Activated naive CD4-positive, alpha-beta T cell treated with anti-CD3 and anti-CD28 coated beads for 36 hours (primary cell): ENCODE measurements at regions of chr10 and their contacts with region 1.

Region 1: DNA sequence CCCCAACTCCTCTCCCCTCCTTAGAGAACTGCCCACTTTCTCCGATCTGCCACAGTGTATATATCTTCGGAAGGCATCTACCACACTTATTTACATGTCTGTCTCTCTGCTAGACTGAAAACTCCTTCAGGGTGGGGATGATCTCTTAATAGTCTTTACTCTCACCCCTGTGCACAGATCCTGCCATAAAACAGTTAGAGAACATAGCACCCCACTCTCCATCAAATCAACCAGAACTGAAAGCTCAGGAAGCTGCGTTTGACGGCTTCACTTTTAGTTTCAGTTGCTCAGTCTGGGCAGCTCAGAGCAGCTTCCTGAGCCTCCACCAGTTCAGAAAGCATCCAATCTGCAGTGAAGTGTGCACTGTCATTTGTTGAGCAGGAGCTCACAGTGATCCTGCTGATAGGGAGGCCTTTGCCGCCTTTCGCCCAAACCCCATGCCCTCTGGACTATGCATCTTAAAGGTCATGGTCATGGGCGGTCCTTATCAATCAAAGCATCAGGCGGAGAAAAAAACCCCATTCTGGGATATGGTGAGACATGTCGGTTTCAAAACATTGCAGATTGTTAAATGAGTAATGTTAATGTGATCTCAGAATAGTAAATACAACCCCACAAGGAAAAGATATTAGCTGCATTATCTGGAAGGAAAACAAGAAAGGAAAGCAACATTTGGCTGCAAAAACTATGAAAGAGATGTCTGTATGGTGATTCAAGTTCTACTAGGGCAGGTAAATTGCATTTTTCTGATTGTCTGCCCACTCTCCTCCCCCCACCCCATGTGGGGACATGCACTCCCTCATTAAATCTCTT is 167.1 kb upstream of the ADO start:
- DNase-seq: peak; percentile 81
- H3K4me3 Mint-ChIP-seq: no peak overlapping the region
- H3K27ac Mint-ChIP-seq: no peak overlapping the region
- H3K4me1 Mint-ChIP-seq: peaks cover 14% of the 10 kb centered on the region
- H3K27me3 Mint-ChIP-seq: no peaks in the 10 kb centered on the region

Region 2: DNA sequence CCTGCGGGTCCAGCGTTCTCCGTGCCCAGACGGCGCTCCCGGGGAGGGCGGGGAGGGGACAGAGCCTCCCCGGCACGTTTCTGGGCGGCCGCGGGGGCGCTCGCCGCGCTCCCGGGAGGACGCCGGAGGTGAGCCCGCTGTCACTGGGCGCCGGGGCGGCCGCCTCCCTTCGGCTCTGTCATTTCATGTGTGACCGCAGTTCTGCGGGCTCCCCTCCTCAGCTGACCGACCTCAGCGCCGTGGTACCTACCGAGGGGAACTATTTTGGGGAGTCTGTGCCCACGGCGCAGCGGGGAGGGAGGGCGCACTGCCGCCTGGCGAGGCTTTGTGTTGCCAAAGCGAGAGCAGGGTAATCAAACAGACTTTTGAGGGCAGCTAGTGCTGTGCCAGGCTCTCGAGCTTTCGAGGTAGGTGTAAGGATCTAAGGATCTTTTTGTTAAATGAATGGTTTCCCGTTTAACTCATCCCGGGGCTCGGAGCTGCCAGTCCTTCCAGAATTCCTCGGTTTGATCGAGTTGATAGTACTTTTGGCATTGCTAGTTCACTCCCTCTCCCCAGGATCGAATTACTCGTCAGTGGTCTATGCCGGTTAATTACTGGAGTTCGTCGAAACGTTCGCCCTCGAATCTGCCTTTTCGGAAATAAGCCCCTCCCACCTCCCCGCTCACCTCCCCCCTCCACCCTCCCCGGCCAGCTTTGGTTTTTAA is 734.1 kb before region 1 on chr10:
- CTCF ChIA-PET with region 1: no interaction called
- intact Hi-C with region 1: loop called (anchors 1 kb)
- DNase-seq: peak; percentile 74
- H3K4me3 Mint-ChIP-seq: peak overlapping the region; percentile 99
- H3K27ac Mint-ChIP-seq: peak overlapping the region; percentile 100
- H3K4me1 Mint-ChIP-seq: peaks cover 42% of the 10 kb centered on the region
- H3K27me3 Mint-ChIP-seq: no peaks in the 10 kb centered on the region

Region 3: GRCh38 chr10:61933859-61934555 is 703.4 kb before region 1 on chr10:
- CTCF ChIA-PET with region 1: no interaction called
- intact Hi-C with region 1: no loop called
- DNase-seq: no peak
- H3K4me3 Mint-ChIP-seq: no peak overlapping the region
- H3K27ac Mint-ChIP-seq: peak overlapping the region; percentile 65
- H3K4me1 Mint-ChIP-seq: peaks cover 86% of the 10 kb centered on the region
- H3K27me3 Mint-ChIP-seq: no peaks in the 10 kb centered on the region

Region 4: GRCh38 chr10:62610649-62611229 is 26.7 kb before region 1 on chr10:
- CTCF ChIA-PET with region 1: interaction called, 8 read pairs
- intact Hi-C with region 1: loop called (anchors 1 kb)
- DNase-seq: peak; percentile 83
- H3K4me3 Mint-ChIP-seq: no peak overlapping the region
- H3K27ac Mint-ChIP-seq: no peak overlapping the region
- H3K4me1 Mint-ChIP-seq: peaks cover 31% of the 10 kb centered on the region
- H3K27me3 Mint-ChIP-seq: peaks cover 5% of the 10 kb centered on the region

Region 5: GRCh38 chr10:62779487-62780248 is 142.2 kb after region 1 on chr10:
- CTCF ChIA-PET with region 1: interaction called, 5 read pairs
- intact Hi-C with region 1: loop called (anchors 1 kb)
- DNase-seq: peak; percentile 94
- H3K4me3 Mint-ChIP-seq: no peak overlapping the region
- H3K27ac Mint-ChIP-seq: peak overlapping the region; percentile 59
- H3K4me1 Mint-ChIP-seq: peaks cover 21% of the 10 kb centered on the region
- H3K27me3 Mint-ChIP-seq: no peaks in the 10 kb centered on the region

Region 6: DNA sequence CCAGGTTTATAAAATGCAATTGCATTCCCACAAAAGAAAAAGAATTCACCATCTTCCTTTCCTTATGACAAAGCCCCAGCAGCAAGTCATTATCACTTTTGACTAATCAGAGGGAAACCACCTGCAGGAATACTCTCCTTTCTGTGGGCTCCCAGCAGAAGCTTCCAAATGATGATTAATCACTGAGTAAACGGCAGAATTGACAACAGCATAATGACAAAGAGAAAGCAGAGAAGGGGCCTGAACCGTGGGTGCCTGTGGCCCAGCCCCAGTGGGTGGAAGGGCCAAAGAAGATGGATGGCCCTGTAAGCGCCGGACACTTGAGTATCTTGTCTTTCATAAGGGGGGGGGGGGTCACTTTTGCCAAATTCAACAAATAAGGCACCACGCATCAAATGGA is 343.2 kb after region 1 on chr10:
- CTCF ChIA-PET with region 1: no interaction called
- intact Hi-C with region 1: loop called (anchors 5 kb)
- DNase-seq: peak; percentile 52
- H3K4me3 Mint-ChIP-seq: no peak overlapping the region
- H3K27ac Mint-ChIP-seq: peak overlapping the region; percentile 76
- H3K4me1 Mint-ChIP-seq: peaks cover 23% of the 10 kb centered on the region
- H3K27me3 Mint-ChIP-seq: peaks cover 8% of the 10 kb centered on the region

Region 7: DNA sequence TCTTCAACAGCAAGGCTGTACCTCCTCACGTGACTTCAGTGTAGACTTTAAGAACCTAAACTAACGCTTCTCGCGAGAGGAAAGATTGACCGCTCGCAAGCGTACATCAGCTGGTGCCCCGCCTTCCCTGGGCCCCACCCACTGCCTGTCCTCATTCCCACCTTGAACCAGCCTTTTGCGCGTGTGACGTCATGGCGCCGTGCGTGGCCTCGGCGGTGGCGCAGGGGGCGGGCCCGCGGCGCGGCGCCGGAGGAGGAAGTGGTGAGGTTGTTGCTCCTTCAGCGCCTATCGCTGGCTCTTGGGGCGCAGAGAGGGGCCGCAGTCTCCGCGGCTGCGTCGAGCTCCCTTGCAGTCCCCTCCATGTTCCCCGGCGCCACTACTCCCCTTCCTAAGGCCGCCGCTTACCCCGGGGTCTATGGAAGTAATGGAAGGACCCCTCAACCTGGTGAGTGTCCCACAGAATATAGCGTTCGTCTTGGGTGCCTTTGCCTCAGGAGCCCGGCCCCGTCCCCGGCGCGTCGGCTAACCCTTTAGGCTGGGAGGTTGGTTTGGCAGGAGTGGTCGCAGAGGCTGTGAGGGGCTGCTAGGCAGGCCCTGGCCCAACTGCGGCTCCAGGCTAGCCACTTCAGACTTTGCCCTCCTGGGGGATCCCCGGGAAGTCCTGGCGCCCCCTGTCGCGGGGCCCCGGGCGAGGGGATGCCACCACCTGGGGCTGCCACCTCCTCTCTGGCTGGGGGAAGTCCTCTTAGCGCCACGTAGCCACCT is 495.8 kb after region 1 on chr10 and contains the start of gene NRBF2:
- CTCF ChIA-PET with region 1: no interaction called
- intact Hi-C with region 1: loop called (anchors 1 kb)
- DNase-seq: peak; percentile 98
- H3K4me3 Mint-ChIP-seq: peak within 1 kb of the TSS; percentile 89
- H3K27ac Mint-ChIP-seq: peak within 1 kb of the TSS; percentile 92
- H3K4me1 Mint-ChIP-seq: peaks cover 38% of the 10 kb centered on the region
- H3K27me3 Mint-ChIP-seq: no peaks in the 10 kb centered on the region
- total RNA-seq, gene NRBF2: 15.4 to 15.6 TPM